Vagina (tissue), 2 donors: ENCODE measurements at regions of chr4 and their contacts with region 1.

Region 1: DNA sequence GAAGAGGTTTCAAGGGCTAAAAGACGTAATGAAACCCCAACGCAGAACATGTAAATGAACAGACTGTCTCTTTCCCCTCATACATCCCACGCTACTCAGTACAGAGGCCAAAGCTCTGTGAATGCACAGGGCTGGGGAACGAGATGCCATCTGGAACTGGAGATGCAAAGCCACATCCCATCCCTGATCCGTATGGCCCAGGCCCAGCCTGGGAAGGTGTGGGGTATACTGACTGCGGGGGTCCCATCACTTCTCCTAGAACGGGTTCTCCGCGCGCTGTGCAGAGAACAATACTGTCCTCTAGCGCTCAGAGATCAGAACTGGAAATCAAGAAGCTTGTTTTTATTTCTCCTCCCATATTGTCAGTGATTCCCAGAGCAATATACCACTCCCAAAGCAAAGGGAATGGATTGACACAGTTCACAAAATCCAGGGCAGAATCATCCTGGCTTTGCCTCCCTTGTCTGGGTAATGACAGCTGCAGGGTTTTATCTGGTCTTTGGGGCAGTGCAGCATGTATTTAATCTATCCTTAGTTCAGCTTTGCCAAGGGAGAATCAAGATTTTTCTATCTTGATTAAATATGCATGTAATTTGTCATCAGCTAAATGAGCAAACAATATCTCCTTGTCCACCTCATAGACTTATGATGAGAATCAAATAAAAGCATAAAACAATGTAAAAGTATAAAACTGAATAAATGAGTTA is 47.3 kb upstream of the TLR3 start:
- DNase-seq: peak in 1 of 2 donors; percentile 74
- H3K4me3 ChIP-seq: peak overlapping the region in 1 of 2 donors; percentile 35
- H3K27ac ChIP-seq: no peak overlapping the region
- H3K4me1 ChIP-seq: peaks cover 6% of the 10 kb centered on the region
- H3K27me3 ChIP-seq: no peaks in the 10 kb centered on the region
- CTCF ChIP-seq: peak in 2 of 3 experiments; percentile 66 to 71
- POLR2A ChIP-seq: no peak

Region 2: DNA sequence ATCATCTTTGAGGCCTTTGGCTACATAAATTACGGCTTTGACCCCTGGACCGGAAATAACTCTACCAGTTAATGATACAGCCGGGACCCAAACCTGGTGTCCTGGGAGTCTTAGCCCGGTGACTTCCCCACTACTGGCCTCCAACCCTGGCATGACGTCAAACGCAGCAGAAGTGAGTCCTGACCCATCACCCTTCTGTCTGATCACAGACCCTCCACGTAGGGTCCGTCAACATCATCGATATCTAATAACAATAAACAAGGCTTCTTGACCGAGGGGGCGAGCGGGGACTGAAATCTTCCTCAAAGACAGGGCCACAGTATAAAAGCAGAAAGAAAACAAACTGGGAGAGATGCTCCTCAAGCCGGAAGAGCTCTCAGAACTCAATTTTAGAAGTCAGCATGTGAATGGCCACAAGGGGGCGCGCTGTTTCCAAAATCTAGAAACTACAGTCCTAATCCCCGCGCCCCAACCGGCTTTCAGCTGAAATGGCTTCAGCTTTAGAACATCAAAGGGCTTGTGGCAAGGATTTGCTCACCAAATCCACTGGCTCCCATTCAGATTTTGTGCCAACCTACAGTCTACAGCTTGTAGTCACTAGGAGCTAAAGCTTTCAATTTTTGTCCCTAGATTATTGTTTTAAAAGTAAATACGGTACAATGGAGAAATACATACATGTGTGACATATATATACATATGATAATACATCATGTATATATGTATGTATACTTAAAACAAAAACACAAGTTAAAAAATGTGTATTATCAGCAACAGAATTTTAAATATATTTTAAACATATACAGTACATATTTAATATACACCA is 1757.5 kb before region 1 on chr4:
- intact Hi-C with region 1: no loop called
- DNase-seq: peak; percentile 89 to 95
- H3K4me3 ChIP-seq: no peak overlapping the region
- H3K27ac ChIP-seq: no peak overlapping the region
- H3K4me1 ChIP-seq: no peaks in the 10 kb centered on the region
- H3K27me3 ChIP-seq: no peaks in the 10 kb centered on the region
- CTCF ChIP-seq: peak; percentile 81 to 91 (median 84)
- POLR2A ChIP-seq: no peak

Region 3: DNA sequence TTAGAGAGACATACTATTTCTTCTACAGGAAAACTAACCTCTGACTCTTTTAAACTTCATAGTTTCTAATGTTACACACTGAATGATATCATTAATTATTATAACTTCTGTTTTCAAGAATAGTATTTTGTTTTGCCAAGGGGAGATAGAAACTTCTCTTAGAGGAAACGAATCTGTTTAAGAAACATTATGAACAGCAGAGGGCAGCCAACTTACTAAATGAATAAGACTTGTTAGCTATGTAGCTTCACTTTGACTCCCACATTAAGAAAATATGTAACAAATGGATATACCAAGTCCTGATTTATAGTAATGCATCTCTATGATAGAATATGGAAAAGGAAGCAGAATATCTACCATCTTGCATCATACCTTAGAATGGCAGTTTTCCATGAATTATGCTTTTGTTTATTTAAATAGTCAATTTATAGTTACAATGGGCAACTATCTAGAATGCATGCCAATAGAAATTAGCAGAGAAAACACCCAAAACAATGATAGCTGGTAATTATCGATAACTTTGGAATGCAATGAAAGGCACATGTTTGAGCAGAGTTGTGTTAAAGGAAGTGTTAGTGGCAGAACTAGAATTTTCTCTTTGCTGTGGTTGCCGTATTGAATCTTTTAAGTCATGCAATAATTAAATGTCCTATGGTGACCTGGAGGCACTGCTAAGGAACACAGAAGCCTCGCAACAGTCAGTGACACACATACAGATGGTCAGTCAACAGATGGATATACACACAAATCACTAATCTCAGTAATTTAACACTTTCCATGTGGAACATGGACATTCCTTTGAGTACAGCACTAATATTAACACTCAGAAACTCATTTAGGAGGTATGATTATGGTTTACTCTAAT is 380.6 kb before region 1 on chr4:
- intact Hi-C with region 1: loop called (anchors 5 kb)
- DNase-seq: no peak
- H3K4me3 ChIP-seq: no peak overlapping the region
- H3K27ac ChIP-seq: no peak overlapping the region
- H3K4me1 ChIP-seq: no peaks in the 10 kb centered on the region
- H3K27me3 ChIP-seq: no peaks in the 10 kb centered on the region
- CTCF ChIP-seq: peak in 1 of 3 experiments; percentile 49
- POLR2A ChIP-seq: no peak